ENCODE measurements at regions of chr6 and their contacts with region 1.

Region 1: DNA sequence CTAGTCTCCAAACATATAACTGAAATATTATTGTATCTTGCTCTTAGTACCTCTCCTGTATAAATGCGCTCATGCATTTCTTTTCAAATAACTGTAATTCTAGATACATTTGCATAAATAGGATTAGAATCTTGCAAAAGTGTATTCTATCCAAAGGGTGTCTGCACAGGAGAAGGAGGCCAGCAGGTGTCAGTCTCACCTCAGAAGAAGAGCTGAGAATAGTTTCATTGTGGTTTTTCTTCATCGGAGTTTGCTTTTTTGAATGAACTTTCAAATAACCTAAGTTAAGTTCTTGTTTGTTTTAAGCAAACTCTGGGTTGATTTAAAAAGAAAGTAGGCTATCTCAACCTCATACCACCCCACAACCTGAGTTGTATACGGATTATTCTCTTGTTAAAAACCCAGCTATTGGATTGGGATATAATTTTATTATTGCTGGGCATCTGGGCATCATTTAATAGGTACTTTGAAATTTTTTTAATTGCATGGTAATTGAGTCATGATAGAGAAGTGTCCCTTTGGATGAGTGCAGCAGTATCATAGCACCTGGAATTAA is 125.0 kb upstream of the MLIP start:
- DNase-seq: peak; percentile 46 to 56
- H3K4me3 ChIP-seq: no peak overlapping the region
- H3K4me3 Mint-ChIP-seq: no peak overlapping the region
- H3K27ac Mint-ChIP-seq: no peak overlapping the region
- H3K4me1 ChIP-seq: no peaks in the 10 kb centered on the region
- H3K4me1 Mint-ChIP-seq: peaks cover 9% of the 10 kb centered on the region
- H3K27me3 ChIP-seq: no peaks in the 10 kb centered on the region; the same call in 1 of the 2 replicates
- H3K27me3 Mint-ChIP-seq: no peaks in the 10 kb centered on the region
- CTCF ChIP-seq: peak; percentile 72 to 85

Region 2: DNA sequence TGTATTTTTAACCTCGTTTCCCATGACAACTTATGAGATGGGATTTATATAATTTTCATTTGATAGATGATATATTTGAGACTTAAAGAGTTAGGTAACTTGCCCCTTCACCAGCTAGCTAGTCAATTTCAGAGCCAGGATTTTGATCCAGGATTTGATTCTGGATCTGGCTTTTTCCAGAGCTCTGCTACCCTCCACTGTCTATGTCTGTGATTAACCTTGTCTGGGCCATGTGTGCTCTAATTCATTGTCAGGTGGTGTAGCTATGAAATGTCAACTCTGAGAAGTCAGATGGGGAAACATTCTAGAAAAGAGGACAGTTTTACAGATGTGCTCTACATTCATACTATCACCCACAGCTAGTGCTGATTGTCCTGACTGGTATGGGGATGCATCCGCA is 82.5 kb after region 1 on chr6:
- CTCF ChIA-PET with region 1: interaction called, 8 read pairs
- POLR2A ChIA-PET with region 1: no interaction called
- intact Hi-C with region 1: loop called (anchors 2 kb)
- DNase-seq: no peak
- H3K4me3 ChIP-seq: no peak overlapping the region
- H3K4me3 Mint-ChIP-seq: no peak overlapping the region
- H3K27ac Mint-ChIP-seq: no peak overlapping the region
- H3K4me1 ChIP-seq: no peaks in the 10 kb centered on the region
- H3K4me1 Mint-ChIP-seq: no peaks in the 10 kb centered on the region
- H3K27me3 ChIP-seq: 0 out of 2 replicates have a peak, but pooled peaks cover 2% of the 10 kb centered on the region
- H3K27me3 Mint-ChIP-seq: no peaks in the 10 kb centered on the region
- CTCF ChIP-seq: no peak

Region 3: GRCh38 chr6:54267798-54268197 is 281.6 kb after region 1 on chr6:
- CTCF ChIA-PET with region 1: interaction called, 3 read pairs
- POLR2A ChIA-PET with region 1: no interaction called
- intact Hi-C with region 1: loop called (anchors 1 kb)
- DNase-seq: peak; percentile 40 to 51
- H3K4me3 ChIP-seq: no peak overlapping the region
- H3K4me3 Mint-ChIP-seq: no peak overlapping the region
- H3K27ac Mint-ChIP-seq: no peak overlapping the region
- H3K4me1 ChIP-seq: 0 out of 2 replicates have a peak, but pooled peaks cover 5% of the 10 kb centered on the region
- H3K4me1 Mint-ChIP-seq: no peaks in the 10 kb centered on the region
- H3K27me3 ChIP-seq: no peaks in the 10 kb centered on the region
- H3K27me3 Mint-ChIP-seq: no peaks in the 10 kb centered on the region
- CTCF ChIP-seq: peak; percentile 63 to 78

Region 4: GRCh38 chr6:55069132-55069781 is 1083.0 kb after region 1 on chr6:
- CTCF ChIA-PET with region 1: no interaction called
- POLR2A ChIA-PET with region 1: no interaction called
- intact Hi-C with region 1: loop called (anchors 1 kb)
- DNase-seq: peak in 1 of 2 experiments; percentile 55
- H3K4me3 ChIP-seq: no peak overlapping the region
- H3K4me3 Mint-ChIP-seq: no peak overlapping the region
- H3K27ac Mint-ChIP-seq: no peak overlapping the region
- H3K4me1 ChIP-seq: no peaks in the 10 kb centered on the region
- H3K4me1 Mint-ChIP-seq: peaks cover 6% of the 10 kb centered on the region
- H3K27me3 ChIP-seq: no peaks in the 10 kb centered on the region
- H3K27me3 Mint-ChIP-seq: peaks cover 4% of the 10 kb centered on the region
- CTCF ChIP-seq: peak; percentile 60 to 74